ENCODE measurements at regions of chr7 and their contacts with region 1.

Region 1: DNA sequence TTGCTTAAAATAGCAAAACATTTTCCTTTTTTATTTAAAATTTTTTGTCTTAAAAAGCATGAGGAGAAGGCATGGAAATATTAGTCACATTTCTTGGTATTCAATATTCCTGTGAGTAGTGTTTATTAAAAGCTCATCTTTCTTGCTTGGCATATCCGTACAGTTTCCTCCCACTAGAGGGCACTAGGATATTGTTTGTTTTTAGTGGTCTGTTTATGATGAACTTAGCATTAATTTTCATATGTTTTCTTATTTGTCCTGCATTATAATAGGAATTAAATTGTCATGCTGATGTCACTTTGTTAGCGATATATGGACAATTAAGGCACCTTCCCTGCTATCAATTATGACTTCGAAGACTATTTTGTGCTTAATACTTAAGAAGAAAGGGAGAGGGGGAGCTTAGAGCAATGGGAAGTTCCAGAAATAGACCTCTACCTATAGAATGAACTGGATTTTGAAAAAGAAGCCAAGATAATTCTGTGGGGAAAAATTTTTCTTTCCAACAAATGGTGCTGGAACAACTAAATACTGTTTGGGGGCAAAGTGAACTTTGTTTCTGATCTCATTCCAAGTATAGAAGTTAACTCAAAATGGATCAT is 91.0 kb upstream of the STRIP2 start:
- DNase-seq: peak in 1 of 2 donors; percentile 7
- ATAC-seq: peak; percentile 77 to 81
- H3K4me3 ChIP-seq: no peak overlapping the region
- H3K27ac ChIP-seq: peak overlapping the region; percentile 1 to 78 (median 52)
- H3K4me1 ChIP-seq: peaks cover 37 to 52% of the 10 kb centered on the region in 2 donors
- H3K27me3 ChIP-seq: no peaks in the 10 kb centered on the region
- CTCF ChIP-seq: peak; percentile 58 to 79 (median 65)
- POLR2A ChIP-seq: no peak

Region 2: DNA sequence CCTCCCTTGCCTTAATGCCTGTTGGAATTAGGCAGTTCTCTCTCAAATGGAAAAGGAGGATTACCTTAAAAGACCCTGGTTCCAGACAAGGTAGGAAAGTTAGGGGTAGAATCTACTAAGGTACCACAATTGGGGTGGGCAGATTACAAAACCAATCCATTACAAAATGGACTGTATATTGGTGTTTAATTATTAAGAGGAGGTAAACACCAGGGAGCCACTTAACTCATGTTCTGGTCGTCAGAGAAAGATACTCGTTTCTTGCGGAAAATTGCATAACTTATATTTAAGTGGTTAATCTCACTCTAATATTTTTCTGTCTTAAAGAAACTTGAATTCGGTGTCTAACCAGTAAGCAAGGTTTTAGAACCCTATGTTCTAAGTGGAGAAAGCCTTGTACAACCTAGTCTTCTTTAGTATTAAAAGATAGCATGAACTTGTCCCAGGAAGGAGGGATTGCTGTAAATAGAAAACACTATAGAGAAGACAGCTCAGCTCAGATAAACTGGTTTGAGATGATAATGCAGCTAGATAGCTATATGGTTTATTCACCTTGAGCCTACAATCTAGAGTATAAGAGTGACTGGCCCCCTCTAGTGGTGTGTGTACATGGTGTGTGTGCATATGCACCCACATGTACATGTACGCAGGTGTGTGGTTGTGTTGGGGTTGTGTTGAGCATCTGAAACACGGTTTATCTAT is 33.0 kb after region 1 on chr7:
- in situ Hi-C with region 1: no loop called
- intact Hi-C with region 1: no loop called
- DNase-seq: peak in 1 of 2 donors; percentile 20
- ATAC-seq: peak; percentile 54 to 71
- H3K4me3 ChIP-seq: no peak overlapping the region
- H3K27ac ChIP-seq: no peak overlapping the region
- H3K4me1 ChIP-seq: peaks cover 0 to 6% of the 10 kb centered on the region in 2 donors
- H3K27me3 ChIP-seq: no peaks in the 10 kb centered on the region
- CTCF ChIP-seq: peak in 3 of 5 experiments; percentile 24 to 60 (median 38)
- POLR2A ChIP-seq: no peak

Region 3: DNA sequence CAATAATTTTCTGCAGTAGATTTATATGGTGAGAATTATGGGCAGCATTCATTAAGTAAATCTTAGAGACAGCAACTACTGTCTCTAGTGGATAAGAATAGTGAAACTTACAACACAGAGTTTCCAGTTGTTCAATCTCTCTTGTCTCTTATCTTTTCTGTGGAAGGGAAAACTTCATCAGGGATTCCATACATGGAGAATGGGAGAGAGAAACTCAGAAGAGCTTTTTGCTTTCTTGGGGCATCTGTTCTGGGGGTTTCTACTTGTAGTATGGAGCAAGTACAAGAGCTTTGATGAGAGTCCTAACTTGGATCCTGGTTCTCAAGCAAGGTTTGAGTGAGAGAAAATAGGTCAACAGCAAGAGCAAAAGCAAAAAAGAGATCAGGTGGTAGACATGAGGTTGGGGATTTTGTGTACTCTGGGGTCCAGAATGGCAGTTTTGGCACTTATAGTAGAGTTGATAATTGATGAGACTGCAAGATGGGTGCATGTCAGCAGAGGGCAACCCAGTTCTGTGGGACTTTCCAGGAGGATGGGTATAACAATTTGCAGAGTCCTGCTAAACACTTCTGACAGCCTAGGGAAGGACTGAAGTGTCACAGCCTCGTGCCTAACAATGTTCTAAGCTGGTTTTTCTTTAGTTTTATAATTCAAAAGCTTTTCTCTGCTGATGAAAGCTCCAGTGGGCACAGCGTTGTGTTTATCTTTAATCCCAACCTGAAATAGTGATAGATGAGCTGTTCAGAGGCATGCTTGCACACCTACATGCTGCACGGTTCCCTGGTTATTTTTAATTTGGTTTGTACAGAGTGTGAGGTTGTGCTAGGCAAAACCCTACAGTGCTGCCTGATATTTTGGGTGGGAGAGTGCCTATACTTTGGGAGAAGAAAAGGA is 59.0 kb after region 1 on chr7:
- in situ Hi-C with region 1: no loop called
- intact Hi-C with region 1: no loop called
- DNase-seq: no peak
- ATAC-seq: peak; percentile 65 to 82
- H3K4me3 ChIP-seq: no peak overlapping the region
- H3K27ac ChIP-seq: peak overlapping the region; percentile 50 to 76 (median 71)
- H3K4me1 ChIP-seq: peaks cover 15 to 38% of the 10 kb centered on the region in 2 donors
- H3K27me3 ChIP-seq: no peaks in the 10 kb centered on the region
- CTCF ChIP-seq: peak in 4 of 5 experiments; percentile 6 to 41 (median 25)
- POLR2A ChIP-seq: no peak

Region 4: GRCh38 chr7:129611246-129612111 is 268.3 kb after region 1 on chr7 and contains the start of gene NRF1:
- in situ Hi-C with region 1: no loop called
- intact Hi-C with region 1: loop called (anchors 10 kb)
- DNase-seq: peak; percentile 82 to 89
- ATAC-seq: peak; percentile 88 to 89
- H3K4me3 ChIP-seq: peak within 1 kb of the TSS; percentile 75 to 91 (median 80)
- H3K27ac ChIP-seq: peak within 1 kb of the TSS; percentile 91 to 97 (median 94)
- H3K4me1 ChIP-seq: peaks cover 20 to 25% of the 10 kb centered on the region in 2 donors
- H3K27me3 ChIP-seq: no peaks in the 10 kb centered on the region
- CTCF ChIP-seq: peak in 2 of 5 experiments; percentile 29 to 43
- POLR2A ChIP-seq: peak; percentile 77 to 81
- total RNA-seq, gene NRF1: 11.3 to 26.3 (median 18.0) TPM